Left ventricle myocardium superior (tissue), 1 donor: ENCODE measurements at regions of chr3 and their contacts with region 1.

Region 1: GRCh38 chr3:109731620-109732473 is 394.5 kb upstream of the DPPA4 start:
- DNase-seq: no peak
- ATAC-seq: peak; percentile 58

Region 2: GRCh38 chr3:109336291-109336861 is 395.5 kb before region 1 on chr3:
- intact Hi-C with region 1: no loop called
- DNase-seq: no peak
- ATAC-seq: peak; percentile 50

Region 3: DNA sequence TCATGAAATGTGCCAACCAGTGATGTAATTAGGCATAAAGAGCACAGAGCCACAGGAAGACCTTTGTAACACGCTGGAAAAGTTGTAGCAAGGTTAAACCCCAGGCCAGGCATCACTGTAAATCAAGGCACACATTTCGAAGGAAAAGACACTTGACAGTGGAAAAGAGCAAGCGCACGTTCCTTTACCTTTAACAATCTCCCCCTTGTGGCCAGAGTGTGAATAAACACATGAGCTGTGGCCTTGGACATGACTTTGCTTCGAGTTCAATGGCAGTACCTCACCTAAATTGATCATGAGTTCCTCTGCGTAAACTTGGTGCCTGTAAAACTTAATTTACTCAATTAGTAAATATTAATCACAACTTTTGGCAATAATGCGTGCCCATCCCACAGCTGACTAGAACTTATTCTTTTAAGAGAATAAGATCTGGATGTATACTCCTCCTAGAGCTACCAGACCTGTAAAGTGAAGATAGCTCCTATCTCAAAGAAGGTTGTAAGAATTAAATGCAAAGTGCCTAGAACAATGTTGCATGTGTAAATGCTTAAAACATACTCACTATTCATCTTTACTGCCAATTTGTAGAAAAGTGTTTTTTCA is 582.8 kb after region 1 on chr3:
- intact Hi-C with region 1: loop called (anchors 10 kb)
- DNase-seq: no peak
- ATAC-seq: peak; percentile 49

Region 4: DNA sequence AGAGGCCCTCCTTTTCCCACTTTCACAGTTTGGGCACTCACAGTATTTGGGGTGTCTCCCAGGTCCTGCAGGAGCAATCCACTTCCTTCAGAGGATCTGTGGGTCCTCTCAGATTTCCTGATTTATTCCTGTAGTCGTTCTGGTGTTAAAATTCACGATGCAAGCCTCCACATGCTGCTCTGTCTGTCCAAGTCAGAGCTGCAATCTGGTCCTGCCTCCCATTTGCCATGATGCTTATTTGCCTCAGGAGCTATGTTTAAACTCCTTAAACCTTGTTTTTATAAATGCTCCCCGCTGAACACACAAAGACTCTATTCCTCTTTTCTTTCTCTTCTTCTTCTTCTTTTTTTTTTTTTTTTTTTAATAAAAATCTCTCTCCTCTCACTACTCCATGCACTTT is 781.1 kb after region 1 on chr3:
- intact Hi-C with region 1: loop called (anchors 5 kb)
- DNase-seq: no peak
- ATAC-seq: no peak